BJ (cell line): ENCODE measurements at regions of chr5 and their contacts with region 1.

Region 1: GRCh38 chr5:174317259-174317894 is 271.9 kb downstream of the NSG2 start:
- DNase-seq: no peak
- H3K4me3 ChIP-seq: no peak overlapping the region
- H3K27me3 ChIP-seq: peaks cover 2% of the 10 kb centered on the region
- CTCF ChIP-seq: peak; percentile 92

Region 2: GRCh38 chr5:174045470-174046025 is 271.8 kb before region 1 on chr5 and contains the start of gene NSG2:
- CTCF ChIA-PET with region 1: interaction called, 45 read pairs
- POLR2A ChIA-PET with region 1: no interaction called
- DNase-seq: peak; percentile 31
- H3K4me3 ChIP-seq: no peak within 1 kb of the TSS
- H3K27me3 ChIP-seq: no peaks in the 10 kb centered on the region
- CTCF ChIP-seq: peak; percentile 57
- polyA plus RNA-seq, gene NSG2: 0.04 and 0.05 TPM in 2 replicates

Region 3: GRCh38 chr5:174327317-174328236 is 10.2 kb after region 1 on chr5:
- CTCF ChIA-PET with region 1: interaction called, 33 read pairs
- POLR2A ChIA-PET with region 1: no interaction called
- DNase-seq: no peak
- H3K4me3 ChIP-seq: no peak overlapping the region
- H3K27me3 ChIP-seq: peaks cover 4% of the 10 kb centered on the region
- CTCF ChIP-seq: peak; percentile 85